Transverse colon (tissue), 4 donors: ENCODE measurements at regions of chr2 and their contacts with region 1.

Region 1: DNA sequence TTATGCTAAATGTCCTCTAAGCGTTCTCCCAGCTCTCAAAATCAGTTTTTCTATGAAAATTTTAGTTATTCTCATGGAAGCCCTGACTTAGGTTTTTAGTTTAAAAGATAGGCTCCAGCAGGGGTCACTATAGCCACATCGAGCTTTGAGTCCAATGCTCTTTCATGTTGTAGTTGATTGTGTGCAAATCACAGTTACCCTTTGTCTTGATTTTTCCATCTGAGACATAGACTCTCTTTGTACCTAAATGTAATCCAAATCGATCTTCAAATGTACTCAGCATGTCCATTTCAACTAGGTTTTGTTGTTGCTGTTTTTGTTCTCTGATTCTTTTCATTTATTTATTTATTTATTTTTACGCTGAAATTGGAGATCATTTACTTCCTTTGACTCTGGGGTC is 26.4 kb upstream of the MSTN start:
- DNase-seq: peak; percentile 56
- H3K4me3 ChIP-seq: no peak overlapping the region
- H3K27ac ChIP-seq: no peak overlapping the region
- H3K4me1 ChIP-seq: peaks cover 0 to 2% (median 0%) of the 10 kb centered on the region in 4 donors
- H3K27me3 ChIP-seq: no peaks in the 10 kb centered on the region
- CTCF ChIP-seq: peak; percentile 68 to 79 (median 70)
- EP300 ChIP-seq: no peak
- POLR2A ChIP-seq: no peak

Region 2: DNA sequence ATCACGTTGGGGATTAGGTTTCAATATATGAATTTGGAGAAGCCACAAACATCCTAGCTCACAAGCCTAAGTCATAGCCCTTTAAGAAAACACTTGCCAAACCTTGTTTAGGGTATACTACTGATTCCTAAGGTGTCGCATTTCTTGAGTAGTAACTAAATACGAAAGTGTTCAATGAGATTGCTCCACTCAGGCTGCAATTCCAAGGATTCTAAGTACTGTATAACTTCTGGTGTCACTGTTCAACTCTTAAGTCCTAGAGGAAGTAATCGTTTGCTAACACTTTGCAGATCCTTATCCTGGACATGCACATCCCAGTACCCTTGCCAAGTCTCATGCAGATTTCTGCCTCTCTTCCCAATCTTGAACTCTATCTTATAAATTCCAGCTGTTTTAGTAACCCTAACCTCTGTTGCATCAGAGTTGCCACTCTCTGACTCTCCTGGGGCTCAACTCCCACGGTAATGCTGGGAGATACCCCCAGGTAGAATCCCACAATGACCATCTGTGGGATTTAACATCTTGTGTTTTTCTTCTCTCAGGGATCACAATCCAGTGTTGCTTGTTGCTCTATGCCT is 108.3 kb after region 1 on chr2:
- in situ Hi-C with region 1: loop called in 1 of 4 experiments (anchors 10 kb)
- intact Hi-C with region 1: no loop called
- DNase-seq: no peak
- H3K4me3 ChIP-seq: no peak overlapping the region
- H3K27ac ChIP-seq: no peak overlapping the region
- H3K4me1 ChIP-seq: peaks cover 0 to 16% (median 2%) of the 10 kb centered on the region in 4 donors
- H3K27me3 ChIP-seq: no peaks in the 10 kb centered on the region
- CTCF ChIP-seq: no peak
- EP300 ChIP-seq: no peak
- POLR2A ChIP-seq: no peak

Region 3: DNA sequence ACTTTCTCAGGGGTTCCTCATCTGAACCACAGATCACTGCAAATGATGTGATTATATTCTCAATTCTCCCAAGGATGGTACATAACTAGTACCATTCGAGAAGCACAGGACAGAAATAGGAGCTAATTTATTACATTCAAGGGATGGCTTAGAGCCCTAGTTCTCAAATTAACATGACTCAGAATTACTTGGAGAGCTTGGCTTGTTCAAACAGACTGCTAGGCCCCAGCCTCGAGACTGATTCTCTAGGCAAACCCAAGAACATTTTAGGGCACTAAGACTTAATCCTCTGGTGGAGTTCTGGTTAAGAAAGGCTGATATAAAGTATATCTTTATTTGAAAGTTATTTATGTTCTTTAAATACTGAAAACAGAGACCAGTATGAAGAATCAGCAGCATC is 194.9 kb after region 1 on chr2:
- in situ Hi-C with region 1: loop called (anchors 10 to 25 kb)
- intact Hi-C with region 1: loop called (anchors 10 kb)
- DNase-seq: no peak
- H3K4me3 ChIP-seq: no peak overlapping the region
- H3K27ac ChIP-seq: no peak overlapping the region
- H3K4me1 ChIP-seq: no peaks in the 10 kb centered on the region
- H3K27me3 ChIP-seq: no peaks in the 10 kb centered on the region
- CTCF ChIP-seq: no peak
- EP300 ChIP-seq: no peak
- POLR2A ChIP-seq: no peak

Region 4: DNA sequence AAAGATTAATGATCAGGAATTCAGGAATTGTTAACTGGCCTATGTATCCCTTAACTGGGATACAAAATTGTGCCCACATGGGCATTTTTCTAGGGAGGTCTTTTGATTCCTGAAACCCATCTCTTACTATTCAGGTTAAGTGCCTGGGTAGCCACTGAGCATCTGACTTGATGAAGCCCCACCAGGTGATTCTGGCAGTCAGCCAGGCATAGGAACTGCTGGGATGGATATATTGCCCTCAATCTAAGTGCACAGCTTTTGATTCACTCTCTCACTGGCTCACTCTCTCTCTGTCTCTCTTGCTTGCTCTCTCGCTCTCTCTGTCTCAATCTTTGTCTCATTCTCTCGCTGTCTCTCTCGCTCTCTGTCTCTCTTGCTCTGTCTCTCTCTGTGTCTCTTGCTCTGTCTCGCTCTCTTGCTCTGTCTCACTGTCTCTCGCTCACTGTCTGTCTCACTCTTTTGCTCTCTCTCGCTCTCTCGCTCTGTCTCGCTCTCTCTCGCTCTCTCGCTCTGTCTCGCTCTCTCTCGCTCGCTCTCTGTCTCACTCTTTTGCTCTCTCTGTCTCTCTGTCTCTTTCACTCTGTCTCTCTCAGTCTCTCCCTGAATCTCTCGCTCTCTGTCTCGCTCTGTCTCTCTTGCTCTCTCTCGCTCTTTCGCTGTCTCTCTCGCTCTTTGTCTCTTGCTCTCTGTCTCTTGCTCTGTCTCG is 276.7 kb after region 1 on chr2:
- in situ Hi-C with region 1: loop called in 3 of 4 experiments (anchors 10 to 25 kb)
- intact Hi-C with region 1: loop called (anchors 10 kb)
- DNase-seq: no peak
- H3K4me3 ChIP-seq: no peak overlapping the region
- H3K27ac ChIP-seq: no peak overlapping the region
- H3K4me1 ChIP-seq: peaks cover 0 to 3% (median 1%) of the 10 kb centered on the region in 4 donors
- H3K27me3 ChIP-seq: no peaks in the 10 kb centered on the region
- CTCF ChIP-seq: no peak
- EP300 ChIP-seq: no peak
- POLR2A ChIP-seq: no peak

Region 5: DNA sequence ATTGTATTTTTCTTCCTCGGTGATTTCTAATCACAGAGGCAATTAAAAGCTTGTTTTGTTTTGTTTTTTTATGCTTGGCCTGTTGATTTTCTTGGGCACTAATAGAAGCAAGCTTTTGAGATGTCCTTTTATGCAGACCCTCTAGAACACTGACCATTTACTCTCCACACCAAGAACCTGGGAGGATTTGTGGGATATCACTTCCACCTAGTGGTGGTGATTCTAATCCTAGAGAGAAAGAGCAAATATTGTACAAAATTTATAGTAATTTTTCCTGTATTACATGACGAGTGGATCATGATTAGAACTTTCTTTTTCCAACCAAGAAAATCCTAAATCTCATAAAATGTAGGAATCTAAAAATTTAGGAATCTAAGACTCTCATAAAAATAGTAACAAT is 422.2 kb after region 1 on chr2:
- in situ Hi-C with region 1: loop called in 2 of 4 experiments (anchors 25 kb)
- intact Hi-C with region 1: no loop called
- DNase-seq: no peak
- H3K4me3 ChIP-seq: no peak overlapping the region
- H3K27ac ChIP-seq: peak overlapping the region in 1 of 4 donors; percentile 74
- H3K4me1 ChIP-seq: peaks cover 0 to 28% (median 22%) of the 10 kb centered on the region in 4 donors
- H3K27me3 ChIP-seq: no peaks in the 10 kb centered on the region
- CTCF ChIP-seq: peak; percentile 24 to 65 (median 48)
- EP300 ChIP-seq: no peak
- POLR2A ChIP-seq: no peak